ENCODE measurements at regions of chr12 and their contacts with region 1.

Region 1: DNA sequence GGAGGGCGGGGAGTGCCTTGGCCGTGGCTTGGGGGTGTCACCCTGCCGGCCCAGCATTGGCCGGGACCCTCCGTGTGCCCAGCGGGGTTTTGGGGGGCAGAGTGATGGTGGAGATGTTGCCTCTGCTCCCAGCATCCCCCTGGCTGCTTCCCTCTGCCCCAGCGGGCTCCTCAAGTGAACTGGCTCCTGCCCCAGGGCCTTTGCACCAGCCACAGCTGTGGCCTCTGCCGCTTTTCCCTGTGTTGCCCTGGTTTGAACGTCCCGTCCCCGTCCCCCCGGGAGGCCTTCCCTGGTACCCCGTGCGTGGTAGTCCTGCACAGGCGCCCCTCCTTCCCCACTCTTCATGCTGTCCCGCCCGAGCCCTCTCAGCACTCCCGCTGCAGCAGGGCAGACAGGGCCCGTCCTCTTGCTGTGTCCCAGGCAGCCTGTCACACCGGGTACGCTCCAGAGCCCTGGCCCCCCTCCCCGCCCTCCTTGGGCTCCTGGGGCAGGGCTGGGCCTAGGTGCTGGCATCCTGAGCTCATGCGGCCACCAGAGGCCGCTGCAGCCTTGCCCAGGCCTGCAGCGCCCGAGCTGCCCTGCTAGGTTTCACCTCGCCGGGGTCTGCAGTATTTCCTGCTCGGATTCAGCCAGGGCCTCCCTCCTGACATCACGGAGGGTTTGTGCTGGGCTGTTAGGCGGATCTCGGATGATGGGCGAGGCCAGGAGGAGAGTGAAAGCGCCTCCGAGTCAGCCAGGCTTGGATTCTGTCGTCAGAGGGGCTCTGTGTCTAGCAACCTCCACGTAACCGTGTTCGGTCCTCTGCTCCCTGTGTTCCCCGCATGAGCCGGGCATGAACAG is 9.5 kb downstream of the NOC4L start:
- DNase-seq: peak; percentile 63
- ATAC-seq: peak; percentile 94
- H3K4me3 ChIP-seq: peak overlapping the region; percentile 39 to 70 (median 48); a peak in 5 of 6 replicates
- H3K27ac ChIP-seq: no peak overlapping the region
- H3K4me1 ChIP-seq: peaks cover 14% of the 10 kb centered on the region
- H3K27me3 ChIP-seq: no peaks in the 10 kb centered on the region
- CTCF ChIP-seq: peak; percentile 96
- EP300 ChIP-seq: no peak
- POLR2A ChIP-seq: no peak
- RAD21 ChIP-seq: peak; percentile 96

Region 2: DNA sequence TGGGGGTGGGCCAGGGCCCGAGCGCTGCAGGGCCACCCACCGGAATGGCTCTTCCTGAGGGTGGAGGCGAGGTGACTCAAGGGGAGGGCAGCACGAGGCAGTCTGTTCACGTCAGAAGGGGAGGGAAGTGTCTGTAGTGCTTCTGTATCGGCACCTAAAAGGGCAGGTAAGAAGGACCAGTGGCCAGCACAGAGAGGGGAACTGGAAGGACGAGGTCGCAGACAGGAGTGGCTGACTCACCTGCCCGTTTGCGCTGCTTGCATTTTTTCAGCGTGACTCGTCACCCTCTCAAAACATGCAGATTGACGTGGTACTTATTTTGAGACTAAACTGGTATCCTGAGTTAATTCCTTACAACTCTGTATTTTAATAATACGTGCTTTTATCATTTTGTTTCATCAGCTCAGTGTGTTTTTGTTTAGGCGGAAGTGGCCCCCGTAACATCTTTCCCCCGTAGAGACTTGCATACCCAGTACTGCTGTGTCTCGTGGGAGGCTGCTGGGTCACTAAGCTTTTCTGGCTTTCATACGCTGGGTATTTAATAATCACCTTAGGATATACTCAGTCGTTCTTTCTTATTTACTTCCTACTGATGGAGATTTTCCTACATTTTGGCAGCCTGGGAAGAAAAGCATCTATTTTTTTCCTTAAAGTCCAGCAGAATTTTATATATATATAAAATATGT is 416.4 kb before region 1 on chr12:
- CTCF ChIA-PET with region 1: no interaction called
- POLR2A ChIA-PET with region 1: no interaction called
- in situ Hi-C with region 1: no loop called
- intact Hi-C with region 1: no loop called
- DNase-seq: no peak
- ATAC-seq: no peak; the same call in 2 of the 3 replicates
- H3K4me3 ChIP-seq: no peak overlapping the region
- H3K27ac ChIP-seq: no peak overlapping the region
- H3K4me1 ChIP-seq: peaks cover 8% of the 10 kb centered on the region; the same call in 1 of the 2 replicates
- H3K27me3 ChIP-seq: no peaks in the 10 kb centered on the region
- CTCF ChIP-seq: no peak
- EP300 ChIP-seq: no peak
- POLR2A ChIP-seq: no peak
- RAD21 ChIP-seq: no peak

Region 3: DNA sequence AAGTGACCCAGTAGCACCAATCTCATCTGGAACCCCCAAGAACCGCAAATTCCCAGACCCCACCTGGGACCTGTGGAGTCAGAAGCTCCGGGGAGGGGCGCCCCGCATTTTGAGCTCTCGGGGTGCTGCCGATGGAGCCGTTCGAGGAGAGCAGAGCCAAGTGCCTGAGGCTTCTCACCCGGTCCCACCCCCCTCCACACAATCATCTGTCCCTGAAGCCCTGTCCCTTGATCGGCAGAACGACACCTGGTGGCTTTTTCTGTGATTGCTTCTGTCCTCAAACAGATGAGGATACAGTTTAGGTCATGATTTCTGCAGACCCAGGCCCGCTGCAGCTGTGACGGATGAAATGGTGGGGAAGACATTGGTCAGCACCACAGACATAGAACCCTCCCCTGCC is 65.2 kb after region 1 on chr12:
- CTCF ChIA-PET with region 1: interaction called, 31 read pairs
- POLR2A ChIA-PET with region 1: no interaction called
- in situ Hi-C with region 1: no loop called
- intact Hi-C with region 1: loop called (anchors 2 kb)
- DNase-seq: peak; percentile 35
- ATAC-seq: peak; percentile 80
- H3K4me3 ChIP-seq: no peak overlapping the region
- H3K27ac ChIP-seq: no peak overlapping the region
- H3K4me1 ChIP-seq: no peaks in the 10 kb centered on the region
- H3K27me3 ChIP-seq: peaks cover 8 to 45% of the 10 kb centered on the region in 2 experiments
- CTCF ChIP-seq: peak; percentile 76
- EP300 ChIP-seq: no peak
- POLR2A ChIP-seq: no peak
- RAD21 ChIP-seq: no peak

Region 4: GRCh38 chr12:132342251-132343227 is 188.8 kb after region 1 on chr12:
- CTCF ChIA-PET with region 1: interaction called, 10 read pairs
- POLR2A ChIA-PET with region 1: no interaction called
- in situ Hi-C with region 1: no loop called
- intact Hi-C with region 1: no loop called
- DNase-seq: peak; percentile 20
- ATAC-seq: peak; percentile 92
- H3K4me3 ChIP-seq: no peak overlapping the region
- H3K27ac ChIP-seq: no peak overlapping the region
- H3K4me1 ChIP-seq: no peaks in the 10 kb centered on the region
- H3K27me3 ChIP-seq: peaks cover 21 to 90% of the 10 kb centered on the region in 2 experiments
- CTCF ChIP-seq: peak; percentile 53
- EP300 ChIP-seq: no peak
- POLR2A ChIP-seq: no peak
- RAD21 ChIP-seq: 0 out of 2 replicates have a peak, but pooled peaks have one; percentile 19